IMR-90 (cell line): ENCODE measurements at regions of chrX and their contacts with region 1.

Region 1: GRCh38 chrX:63686878-63687714 is 97.9 kb downstream of the ARHGEF9 start:
- DNase-seq: peak; percentile 45
- ATAC-seq: peak; percentile 90
- H3K4me3 ChIP-seq: no peak overlapping the region
- H3K27ac ChIP-seq: no peak overlapping the region
- H3K4me1 ChIP-seq: 0 out of 2 replicates have a peak, but pooled peaks cover 2% of the 10 kb centered on the region
- H3K27me3 ChIP-seq: no peaks in the 10 kb centered on the region
- CTCF ChIP-seq: peak; percentile 75
- POLR2A ChIP-seq: no peak
- RAD21 ChIP-seq: peak; percentile 82

Region 2: GRCh38 chrX:63101879-63102620 is 585.0 kb before region 1 on chrX:
- CTCF ChIA-PET with region 1: no interaction called
- POLR2A ChIA-PET with region 1: no interaction called
- dilution Hi-C with region 1: no loop called
- in situ Hi-C with region 1: no loop called
- intact Hi-C with region 1: no loop called
- DNase-seq: no peak
- ATAC-seq: no peak
- H3K4me3 ChIP-seq: no peak overlapping the region
- H3K27ac ChIP-seq: no peak overlapping the region
- H3K4me1 ChIP-seq: no peaks in the 10 kb centered on the region
- H3K27me3 ChIP-seq: no peaks in the 10 kb centered on the region
- CTCF ChIP-seq: no peak
- POLR2A ChIP-seq: no peak
- RAD21 ChIP-seq: no peak

Region 3: GRCh38 chrX:63506320-63506719 is 180.8 kb before region 1 on chrX:
- CTCF ChIA-PET with region 1: no interaction called
- POLR2A ChIA-PET with region 1: no interaction called
- dilution Hi-C with region 1: no loop called
- in situ Hi-C with region 1: no loop called
- intact Hi-C with region 1: loop called (anchors 5 kb)
- DNase-seq: peak; percentile 56
- ATAC-seq: peak; percentile 68
- H3K4me3 ChIP-seq: no peak overlapping the region
- H3K27ac ChIP-seq: no peak overlapping the region
- H3K4me1 ChIP-seq: no peaks in the 10 kb centered on the region
- H3K27me3 ChIP-seq: no peaks in the 10 kb centered on the region
- CTCF ChIP-seq: peak; percentile 43
- POLR2A ChIP-seq: no peak
- RAD21 ChIP-seq: peak; percentile 52

Region 4: GRCh38 chrX:63566856-63567255 is 120.2 kb before region 1 on chrX:
- CTCF ChIA-PET with region 1: no interaction called
- POLR2A ChIA-PET with region 1: no interaction called
- dilution Hi-C with region 1: no loop called
- in situ Hi-C with region 1: no loop called
- intact Hi-C with region 1: no loop called
- DNase-seq: no peak
- ATAC-seq: no peak
- H3K4me3 ChIP-seq: no peak overlapping the region
- H3K27ac ChIP-seq: no peak overlapping the region
- H3K4me1 ChIP-seq: no peaks in the 10 kb centered on the region
- H3K27me3 ChIP-seq: no peaks in the 10 kb centered on the region
- CTCF ChIP-seq: no peak
- POLR2A ChIP-seq: no peak
- RAD21 ChIP-seq: no peak

Region 5: GRCh38 chrX:63930140-63930539 is 243.0 kb after region 1 on chrX:
- CTCF ChIA-PET with region 1: no interaction called
- POLR2A ChIA-PET with region 1: no interaction called
- dilution Hi-C with region 1: no loop called
- in situ Hi-C with region 1: no loop called
- intact Hi-C with region 1: no loop called
- DNase-seq: no peak
- ATAC-seq: no peak
- H3K4me3 ChIP-seq: no peak overlapping the region
- H3K27ac ChIP-seq: no peak overlapping the region
- H3K4me1 ChIP-seq: no peaks in the 10 kb centered on the region
- H3K27me3 ChIP-seq: no peaks in the 10 kb centered on the region
- CTCF ChIP-seq: peak; percentile 28; the same call in 1 of the 2 replicates
- POLR2A ChIP-seq: no peak
- RAD21 ChIP-seq: no peak; the same call in 1 of the 2 replicates